ENCODE measurements at regions of chr7 and their contacts with region 1.

Region 1: DNA sequence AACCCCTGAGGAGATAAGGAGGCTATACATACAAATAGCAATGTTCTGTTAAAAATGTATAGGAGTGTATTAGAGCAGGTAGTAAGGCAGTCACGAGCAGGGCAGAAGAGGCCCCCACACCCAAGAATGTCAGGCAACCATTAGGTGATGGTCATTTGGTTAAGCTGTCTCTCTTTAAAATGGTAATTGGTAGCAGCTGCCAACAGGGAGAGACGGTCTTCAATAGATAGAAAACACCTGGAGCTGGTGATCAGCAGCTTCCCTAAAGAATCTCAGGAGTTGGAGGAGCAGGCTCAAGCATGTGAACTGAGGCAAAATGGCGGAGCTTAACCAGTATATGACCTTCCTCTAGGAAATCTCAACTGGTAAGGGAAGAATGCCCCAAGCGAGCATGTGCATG is 26.4 kb upstream of the HTR5A start:
- DNase-seq: no peak
- ATAC-seq: no peak

Region 2: GRCh38 chr7:154956427-154956826 is 87.3 kb before region 1 on chr7:
- intact Hi-C with region 1: loop called (anchors 1 kb)
- DNase-seq: no peak
- ATAC-seq: no peak